Endothelial cell of umbilical vein (primary cell): ENCODE measurements at regions of chr12 and their contacts with region 1.

Region 1: GRCh38 chr12:50924439-50925341 is 27.7 kb upstream of the HIGD1C start:
- DNase-seq: peak; percentile 94
- H3K4me3 ChIP-seq: peak overlapping the region; percentile 48 to 66 (median 55)
- H3K27ac ChIP-seq: peak overlapping the region; percentile 65
- H3K4me1 ChIP-seq: peaks cover 24% of the 10 kb centered on the region
- H3K27me3 ChIP-seq: no peaks in the 10 kb centered on the region
- CTCF ChIP-seq: no peak
- POLR2A ChIP-seq: no peak

Region 2: GRCh38 chr12:50390284-50390683 is 534.4 kb before region 1 on chr12:
- CTCF ChIA-PET with region 1: no interaction called
- POLR2A ChIA-PET with region 1: no interaction called
- dilution Hi-C with region 1: no loop called
- intact Hi-C with region 1: no loop called
- DNase-seq: peak; percentile 83
- H3K4me3 ChIP-seq: no peak overlapping the region
- H3K27ac ChIP-seq: peak overlapping the region; percentile 81
- H3K4me1 ChIP-seq: peaks cover 15% of the 10 kb centered on the region
- H3K27me3 ChIP-seq: no peaks in the 10 kb centered on the region
- CTCF ChIP-seq: no peak
- POLR2A ChIP-seq: no peak

Region 3: DNA sequence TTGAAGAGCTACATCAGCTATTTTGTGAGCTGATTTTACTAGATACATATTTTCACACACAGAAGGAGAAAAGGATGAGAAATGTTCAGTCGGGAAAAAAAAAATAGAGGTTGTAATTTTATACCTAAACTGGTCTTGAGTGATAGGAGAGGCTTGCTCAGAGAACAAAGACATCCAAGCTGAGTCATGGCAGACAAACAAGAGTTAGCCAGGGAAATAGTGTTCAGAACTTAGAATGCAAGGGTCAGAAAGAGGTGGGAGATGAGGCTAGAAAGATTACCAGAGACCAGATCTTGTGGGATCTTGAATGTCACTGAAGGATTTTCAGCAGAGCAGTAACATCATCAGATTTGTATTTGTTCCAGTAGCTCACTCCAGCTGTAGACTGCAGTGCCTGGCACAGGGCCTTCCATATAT is 282.6 kb before region 1 on chr12:
- CTCF ChIA-PET with region 1: no interaction called
- POLR2A ChIA-PET with region 1: no interaction called
- dilution Hi-C with region 1: no loop called
- intact Hi-C with region 1: no loop called
- DNase-seq: peak; percentile 74
- H3K4me3 ChIP-seq: no peak overlapping the region
- H3K27ac ChIP-seq: peak overlapping the region; percentile 9
- H3K4me1 ChIP-seq: peaks cover 12% of the 10 kb centered on the region
- H3K27me3 ChIP-seq: no peaks in the 10 kb centered on the region
- CTCF ChIP-seq: no peak
- POLR2A ChIP-seq: no peak

Region 4: DNA sequence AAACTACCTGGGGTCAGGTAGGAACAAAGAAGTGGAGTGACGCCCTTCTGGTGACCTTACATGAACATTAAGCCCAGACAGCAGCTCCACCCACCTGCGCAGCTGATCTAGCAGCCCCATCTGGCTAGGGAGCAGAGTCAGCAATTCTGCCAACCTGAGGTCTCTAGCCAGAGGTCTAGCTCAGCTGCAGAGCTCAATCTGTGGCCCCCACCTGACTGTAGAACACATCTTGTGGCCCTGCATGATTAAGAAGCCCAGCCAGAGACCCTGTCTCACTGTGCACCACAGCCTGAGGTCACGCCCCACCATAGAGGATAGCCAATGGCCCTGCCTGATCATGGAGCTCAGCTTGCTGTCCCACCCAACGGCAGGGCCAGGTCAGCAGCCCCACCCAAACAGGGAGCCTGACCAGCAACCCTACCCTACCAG is 23.0 kb before region 1 on chr12:
- CTCF ChIA-PET with region 1: no interaction called
- POLR2A ChIA-PET with region 1: no interaction called
- dilution Hi-C with region 1: no loop called
- intact Hi-C with region 1: no loop called
- DNase-seq: no peak
- H3K4me3 ChIP-seq: no peak overlapping the region
- H3K27ac ChIP-seq: no peak overlapping the region
- H3K4me1 ChIP-seq: no peaks in the 10 kb centered on the region
- H3K27me3 ChIP-seq: no peaks in the 10 kb centered on the region
- CTCF ChIP-seq: no peak
- POLR2A ChIP-seq: no peak

Region 5: GRCh38 chr12:50986966-50987737 is 62.5 kb after region 1 on chr12:
- CTCF ChIA-PET with region 1: interaction called, 21 read pairs
- POLR2A ChIA-PET with region 1: no interaction called
- dilution Hi-C with region 1: no loop called
- intact Hi-C with region 1: loop called (anchors 5 kb)
- DNase-seq: peak; percentile 81
- H3K4me3 ChIP-seq: no peak overlapping the region
- H3K27ac ChIP-seq: peak overlapping the region; percentile 15
- H3K4me1 ChIP-seq: peaks cover 41% of the 10 kb centered on the region
- H3K27me3 ChIP-seq: no peaks in the 10 kb centered on the region
- CTCF ChIP-seq: peak; percentile 28 to 53
- POLR2A ChIP-seq: no peak

Region 6: GRCh38 chr12:51025836-51026638 is 101.3 kb after region 1 on chr12 and contains the start of gene SLC11A2:
- CTCF ChIA-PET with region 1: no interaction called
- POLR2A ChIA-PET with region 1: no interaction called
- dilution Hi-C with region 1: no loop called
- intact Hi-C with region 1: loop called (anchors 2 kb)
- DNase-seq: peak; percentile 95
- H3K4me3 ChIP-seq: peak within 1 kb of the TSS; percentile 64 to 79 (median 78)
- H3K27ac ChIP-seq: peak within 1 kb of the TSS; percentile 90
- H3K4me1 ChIP-seq: peaks cover 17% of the 10 kb centered on the region
- H3K27me3 ChIP-seq: peaks cover 5 to 7% of the 10 kb centered on the region in 2 experiments
- CTCF ChIP-seq: peak in 1 of 2 donors; percentile 31
- POLR2A ChIP-seq: peak; percentile 73
- total RNA-seq, gene SLC11A2: 41.1 and 56.4 TPM in 2 replicates